ENCODE measurements at regions of chr19 and their contacts with region 1.

Region 1: DNA sequence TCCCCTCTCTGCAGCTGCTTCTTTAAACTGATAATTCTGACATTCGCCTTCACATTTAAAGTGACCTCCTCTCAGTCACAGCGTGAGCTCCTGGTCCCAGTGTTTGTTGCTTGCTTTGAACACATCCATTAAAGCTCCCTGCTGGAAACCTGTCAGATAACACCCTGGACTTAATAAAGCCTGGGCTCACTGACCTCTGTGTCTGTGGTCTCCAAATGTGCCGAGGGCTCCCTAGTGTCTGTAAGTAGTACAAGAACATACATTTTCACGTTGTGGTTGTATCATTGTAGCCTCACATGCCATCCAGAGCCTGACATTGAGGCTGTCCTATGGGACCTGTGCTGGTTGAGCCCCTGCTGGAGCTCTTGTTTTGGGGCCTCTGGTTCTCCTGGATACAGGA is 2.6 kb upstream of the PSG4 start:
- DNase-seq: no peak
- H3K4me3 ChIP-seq: no peak overlapping the region
- H3K27ac ChIP-seq: no peak overlapping the region
- H3K4me1 ChIP-seq: peaks cover 0 to 5% (median 2%) of the 10 kb centered on the region in 4 donors
- H3K27me3 ChIP-seq: no peaks in the 10 kb centered on the region
- CTCF ChIP-seq: no peak
- EP300 ChIP-seq: no peak
- POLR2A ChIP-seq: no peak

Region 2: GRCh38 chr19:43101950-43102349 is 106.0 kb before region 1 on chr19:
- intact Hi-C with region 1: loop called (anchors 5 kb)
- DNase-seq: no peak
- H3K4me3 ChIP-seq: no peak overlapping the region
- H3K27ac ChIP-seq: no peak overlapping the region
- H3K4me1 ChIP-seq: no peaks in the 10 kb centered on the region
- H3K27me3 ChIP-seq: no peaks in the 10 kb centered on the region
- CTCF ChIP-seq: no peak
- EP300 ChIP-seq: no peak
- POLR2A ChIP-seq: no peak

Measured in esophagus muscularis mucosa (tissue), 4 donors.